GM10248 (cell line): ENCODE measurements at regions of chr17 and their contacts with region 1.

Region 1: GRCh38 chr17:8359769-8360168 is 16.7 kb downstream of the KRABD2 start:
- DNase-seq: no peak
- CTCF ChIP-seq: no peak

Region 2: DNA sequence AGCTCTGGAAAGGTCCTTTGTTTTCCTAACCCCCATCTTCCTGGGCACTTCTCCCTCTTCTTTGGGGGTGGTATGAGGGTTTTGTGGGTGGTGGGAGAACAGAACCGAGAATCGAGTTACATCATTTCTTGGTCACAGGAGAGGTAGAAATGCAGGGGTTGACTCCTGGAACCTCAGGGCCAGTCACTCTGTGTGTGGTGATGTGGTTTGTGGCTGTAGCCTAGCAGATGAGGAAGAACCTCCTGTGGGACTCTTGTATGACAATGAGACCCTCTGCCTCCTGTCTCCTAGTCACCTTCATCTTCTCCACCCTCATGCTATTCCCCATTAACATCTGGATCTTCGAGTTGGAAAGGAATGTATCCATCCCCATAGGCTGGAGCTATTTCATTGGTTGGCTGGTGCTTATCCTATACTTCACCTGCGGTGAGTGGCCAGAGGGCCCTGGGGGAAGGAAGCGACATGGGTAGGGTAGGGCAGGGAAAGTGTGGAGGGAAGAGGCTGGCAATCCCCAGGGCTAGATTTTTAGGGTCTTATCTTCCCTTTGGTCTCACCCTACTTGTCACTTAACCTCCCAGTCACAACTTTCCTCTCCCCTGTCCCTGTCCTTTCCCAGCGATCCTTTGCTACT is 14.6 kb before region 1 on chr17:
- CTCF ChIA-PET with region 1: no interaction called
- POLR2A ChIA-PET with region 1: no interaction called
- DNase-seq: no peak
- CTCF ChIP-seq: no peak

Region 3: DNA sequence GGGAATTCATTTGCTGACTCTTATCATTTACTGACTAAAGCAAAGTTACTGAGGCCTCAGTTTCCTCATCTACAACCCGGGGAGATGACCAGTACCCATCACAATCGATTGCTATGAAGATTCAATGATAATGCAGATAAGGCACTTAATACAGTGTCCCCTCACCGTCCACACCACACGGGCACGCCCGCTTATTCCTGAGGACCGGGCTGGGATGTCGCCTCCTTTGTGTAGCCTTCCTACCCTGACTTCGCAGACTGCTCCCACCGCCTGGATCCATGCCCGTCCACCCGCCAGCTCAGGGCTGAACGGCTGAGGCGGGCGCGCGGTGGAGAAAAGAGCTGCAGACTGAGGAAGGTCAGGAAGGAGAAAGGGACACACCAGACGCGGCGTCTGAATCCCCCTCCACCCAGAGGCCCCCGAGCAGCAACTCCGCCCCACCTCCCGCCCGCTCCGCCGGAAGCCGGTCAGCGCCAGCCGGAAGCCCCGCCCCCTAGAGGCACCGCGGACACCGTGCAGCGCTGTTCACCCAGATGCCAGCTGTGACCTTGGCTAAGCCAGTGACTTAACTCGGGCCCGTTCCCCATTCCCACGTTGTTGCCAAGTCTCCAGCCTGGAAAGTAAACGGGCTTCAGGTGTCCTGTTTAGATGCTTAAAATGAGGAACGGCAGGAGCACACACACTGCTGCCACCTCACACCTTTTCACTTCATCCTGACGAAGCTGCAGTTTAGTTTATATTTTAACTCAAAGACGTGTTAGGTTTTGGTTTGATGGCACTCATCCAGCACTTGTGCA is 16.7 kb after region 1 on chr17 and contains the start of gene KRABD2:
- CTCF ChIA-PET with region 1: interaction called, 18 read pairs
- POLR2A ChIA-PET with region 1: no interaction called
- DNase-seq: peak; percentile 97
- CTCF ChIP-seq: peak; percentile 66